B cell (primary cell): ENCODE measurements at regions of chr6 and their contacts with region 1.

Region 1: GRCh38 chr6:136792410-136793262 is at the start of gene MAP3K5:
- DNase-seq: peak; percentile 96
- ATAC-seq: peak; percentile 68
- H3K4me3 ChIP-seq: peak within 1 kb of the TSS; percentile 81 to 99 (median 96)
- H3K4me3 Mint-ChIP-seq: peak within 1 kb of the TSS; percentile 95
- H3K27ac ChIP-seq: peak within 1 kb of the TSS; percentile 95 to 98
- H3K27ac Mint-ChIP-seq: peak within 1 kb of the TSS; percentile 95
- H3K4me1 ChIP-seq: peaks cover 35 to 36% of the 10 kb centered on the region in 2 donors
- H3K4me1 Mint-ChIP-seq: peaks cover 39% of the 10 kb centered on the region
- H3K27me3 ChIP-seq: no peaks in the 10 kb centered on the region
- H3K27me3 Mint-ChIP-seq: no peaks in the 10 kb centered on the region
- CTCF ChIP-seq: peak; percentile 76
- total RNA-seq, gene MAP3K5: 34.1 and 35.1 TPM in 2 replicates

Region 2: GRCh38 chr6:136652656-136653055 is 140.0 kb before region 1 on chr6:
- CTCF ChIA-PET with region 1: interaction called, 433 read pairs
- POLR2A ChIA-PET with region 1: interaction called, 3 read pairs
- intact Hi-C with region 1: no loop called
- DNase-seq: no peak
- ATAC-seq: no peak
- H3K4me3 ChIP-seq: no peak overlapping the region
- H3K4me3 Mint-ChIP-seq: no peak overlapping the region
- H3K27ac ChIP-seq: no peak overlapping the region
- H3K27ac Mint-ChIP-seq: no peak overlapping the region
- H3K4me1 ChIP-seq: peaks cover 0 to 1% of the 10 kb centered on the region in 2 donors
- H3K4me1 Mint-ChIP-seq: peaks cover 3% of the 10 kb centered on the region
- H3K27me3 ChIP-seq: no peaks in the 10 kb centered on the region
- H3K27me3 Mint-ChIP-seq: no peaks in the 10 kb centered on the region
- CTCF ChIP-seq: no peak

Region 3: GRCh38 chr6:136701045-136701444 is 91.6 kb before region 1 on chr6:
- CTCF ChIA-PET with region 1: interaction called, 16 read pairs
- POLR2A ChIA-PET with region 1: interaction called, 3 read pairs
- intact Hi-C with region 1: no loop called
- DNase-seq: no peak
- ATAC-seq: no peak
- H3K4me3 ChIP-seq: no peak overlapping the region
- H3K4me3 Mint-ChIP-seq: no peak overlapping the region
- H3K27ac ChIP-seq: no peak overlapping the region
- H3K27ac Mint-ChIP-seq: no peak overlapping the region
- H3K4me1 ChIP-seq: peaks cover 3 to 8% of the 10 kb centered on the region in 2 donors
- H3K4me1 Mint-ChIP-seq: peaks cover 17% of the 10 kb centered on the region
- H3K27me3 ChIP-seq: no peaks in the 10 kb centered on the region
- H3K27me3 Mint-ChIP-seq: no peaks in the 10 kb centered on the region
- CTCF ChIP-seq: no peak

Region 4: DNA sequence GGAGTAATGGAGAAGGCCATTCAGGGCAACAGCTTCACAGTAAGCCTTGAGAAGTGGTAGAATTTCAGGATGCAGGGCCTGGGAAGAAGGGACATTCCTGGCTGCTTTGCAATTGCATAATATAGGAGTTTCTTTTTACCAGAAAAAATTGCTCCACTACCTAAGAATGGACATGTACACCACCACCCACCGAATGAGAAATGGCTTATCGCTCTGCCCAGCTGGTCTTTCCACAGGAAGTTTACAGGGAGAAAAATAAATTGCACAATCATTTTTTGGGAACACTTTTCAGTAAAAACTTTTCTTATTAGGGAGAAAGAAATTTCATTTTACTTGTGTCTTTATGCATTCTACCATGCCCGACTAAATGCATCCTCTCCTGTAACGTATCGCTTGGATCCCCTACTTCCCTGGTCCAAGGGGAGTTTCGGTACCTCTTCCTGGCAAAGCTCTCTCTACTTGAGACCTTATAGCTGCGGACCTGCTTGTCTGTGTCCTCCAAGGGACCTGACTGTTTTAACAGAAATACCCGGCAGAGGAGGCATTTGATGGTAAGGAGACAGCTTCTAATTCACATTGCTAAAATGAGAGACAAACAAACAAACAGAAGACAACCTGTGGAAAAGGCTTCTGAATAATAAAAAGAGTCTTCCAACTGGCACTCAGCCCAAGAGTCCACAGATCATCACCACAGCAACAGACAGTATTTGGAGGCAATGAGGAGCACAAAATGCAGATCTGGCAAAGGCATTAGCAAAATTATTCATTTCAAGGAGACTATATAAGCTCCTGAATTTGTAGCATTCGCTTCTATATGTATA is 54.6 kb before region 1 on chr6:
- CTCF ChIA-PET with region 1: interaction called, 125 read pairs
- POLR2A ChIA-PET with region 1: interaction called, 4 read pairs
- intact Hi-C with region 1: loop called (anchors 1 kb)
- DNase-seq: no peak
- ATAC-seq: no peak
- H3K4me3 ChIP-seq: no peak overlapping the region
- H3K4me3 Mint-ChIP-seq: no peak overlapping the region
- H3K27ac ChIP-seq: no peak overlapping the region
- H3K27ac Mint-ChIP-seq: no peak overlapping the region
- H3K4me1 ChIP-seq: peaks cover 0 to 2% of the 10 kb centered on the region in 2 donors
- H3K4me1 Mint-ChIP-seq: peaks cover 46% of the 10 kb centered on the region
- H3K27me3 ChIP-seq: no peaks in the 10 kb centered on the region
- H3K27me3 Mint-ChIP-seq: no peaks in the 10 kb centered on the region
- CTCF ChIP-seq: no peak

Region 5: DNA sequence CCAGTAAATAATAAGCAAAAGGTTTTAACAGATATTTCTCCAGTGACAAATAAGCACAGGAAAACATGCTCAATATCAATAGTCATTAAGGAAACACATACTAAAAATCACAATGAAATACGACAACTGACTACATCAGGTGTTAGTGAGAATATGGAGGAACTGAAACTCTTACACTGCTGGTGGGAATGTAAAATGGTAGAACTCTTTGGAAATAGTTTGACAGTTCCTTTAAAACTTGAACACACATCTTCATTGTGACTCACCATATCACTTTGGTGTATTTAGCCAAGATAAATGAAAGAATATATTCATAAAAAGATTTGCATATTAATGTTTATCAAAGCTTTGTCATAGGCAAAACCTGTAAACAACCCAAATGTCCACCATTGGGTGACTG is 11.0 kb after region 1 on chr6:
- CTCF ChIA-PET with region 1: interaction called, 10 read pairs
- POLR2A ChIA-PET with region 1: no interaction called
- intact Hi-C with region 1: no loop called
- DNase-seq: no peak
- ATAC-seq: no peak
- H3K4me3 ChIP-seq: no peak overlapping the region
- H3K4me3 Mint-ChIP-seq: no peak overlapping the region
- H3K27ac ChIP-seq: no peak overlapping the region
- H3K27ac Mint-ChIP-seq: no peak overlapping the region
- H3K4me1 ChIP-seq: no peaks in the 10 kb centered on the region
- H3K4me1 Mint-ChIP-seq: no peaks in the 10 kb centered on the region
- H3K27me3 ChIP-seq: peaks cover 0 to 5% (median 0%) of the 10 kb centered on the region in 4 experiments
- H3K27me3 Mint-ChIP-seq: peaks cover 3% of the 10 kb centered on the region
- CTCF ChIP-seq: no peak